SK-N-SH (cell line): ENCODE measurements at regions of chr19 and their contacts with region 1.

Region 1: DNA sequence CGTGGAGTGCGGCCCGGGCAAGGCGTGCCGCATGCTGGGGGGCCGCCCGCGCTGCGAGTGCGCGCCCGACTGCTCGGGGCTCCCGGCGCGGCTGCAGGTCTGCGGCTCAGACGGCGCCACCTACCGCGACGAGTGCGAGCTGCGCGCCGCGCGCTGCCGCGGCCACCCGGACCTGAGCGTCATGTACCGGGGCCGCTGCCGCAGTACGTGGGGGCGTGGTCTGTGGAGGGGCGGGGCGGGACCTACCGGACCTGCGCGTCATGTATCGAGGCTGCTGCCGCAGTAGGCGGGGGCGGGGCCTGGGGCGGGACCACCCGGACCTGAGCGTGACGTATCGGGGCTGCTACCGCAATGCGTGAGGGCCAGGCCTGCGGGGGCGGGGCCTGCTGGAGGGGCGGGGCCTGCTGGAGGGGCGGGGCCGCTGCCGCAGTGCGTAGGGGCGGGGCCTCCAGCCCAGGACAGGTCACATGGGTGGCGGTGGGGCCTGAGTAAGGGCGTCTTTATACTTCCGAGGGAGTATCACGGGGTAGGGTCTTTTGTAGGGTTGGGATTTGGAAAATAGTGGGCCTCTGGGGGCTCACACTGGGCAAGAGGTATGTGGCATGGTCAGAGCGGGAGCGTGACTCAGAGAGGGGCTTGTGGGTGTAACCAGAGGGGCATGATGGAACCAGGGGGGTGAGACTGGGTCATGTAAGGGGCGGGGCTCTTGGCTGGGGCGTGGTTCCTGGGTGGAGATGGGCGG is 4.3 kb downstream of the FSTL3 start:
- DNase-seq: peak; percentile 98
- H3K4me3 ChIP-seq: peak overlapping the region; percentile 82 to 95
- H3K27ac ChIP-seq: peak overlapping the region; percentile 93 to 96
- H3K4me1 ChIP-seq: peaks cover 8 to 29% of the 10 kb centered on the region in 2 experiments; a peak in 3 of 4 replicates
- H3K27me3 ChIP-seq: no peaks in the 10 kb centered on the region
- CTCF ChIP-seq: peak; percentile 41
- EP300 ChIP-seq: no peak
- RAD21 ChIP-seq: peak; percentile 14; the same call in 1 of the 2 replicates

Region 2: DNA sequence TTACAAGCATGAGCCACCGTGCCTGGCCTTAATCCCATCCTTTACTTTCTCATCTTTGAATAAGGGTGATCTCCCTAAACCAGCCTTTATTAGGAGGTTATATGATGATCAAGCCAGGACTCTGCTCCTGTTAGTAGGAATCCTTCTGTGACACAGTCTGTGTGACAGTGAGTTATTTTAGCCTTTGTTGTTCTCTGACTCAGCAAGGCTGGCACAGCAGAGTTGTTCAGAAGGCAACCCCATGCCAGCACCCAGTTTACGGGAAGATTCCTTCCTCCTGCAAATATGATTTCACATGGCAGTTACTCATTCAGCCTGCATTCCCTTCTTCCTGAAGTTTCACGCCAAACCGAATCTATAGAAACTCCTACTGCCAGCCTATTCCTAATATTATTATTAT is 325.3 kb before region 1 on chr19:
- CTCF ChIA-PET with region 1: no interaction called
- POLR2A ChIA-PET with region 1: no interaction called
- DNase-seq: no peak
- H3K4me3 ChIP-seq: no peak overlapping the region
- H3K27ac ChIP-seq: no peak overlapping the region
- H3K4me1 ChIP-seq: no peaks in the 10 kb centered on the region; a peak in 1 of 4 replicates
- H3K27me3 ChIP-seq: no peaks in the 10 kb centered on the region
- CTCF ChIP-seq: no peak
- EP300 ChIP-seq: no peak
- RAD21 ChIP-seq: no peak

Region 3: GRCh38 chr19:623974-624373 is 56.5 kb before region 1 on chr19:
- CTCF ChIA-PET with region 1: no interaction called
- POLR2A ChIA-PET with region 1: no interaction called
- DNase-seq: no peak
- H3K4me3 ChIP-seq: no peak overlapping the region
- H3K27ac ChIP-seq: peak overlapping the region in 1 of 2 experiments; percentile 52; a peak in 1 of 4 replicates
- H3K4me1 ChIP-seq: peaks cover 0 to under 1% of the 10 kb centered on the region in 2 experiments; a peak in 1 of 4 replicates
- H3K27me3 ChIP-seq: no peaks in the 10 kb centered on the region
- CTCF ChIP-seq: no peak
- EP300 ChIP-seq: no peak
- RAD21 ChIP-seq: no peak

Region 4: GRCh38 chr19:703651-704446 is 23.4 kb after region 1 on chr19:
- CTCF ChIA-PET with region 1: interaction called, 27 read pairs
- POLR2A ChIA-PET with region 1: interaction called, 6 read pairs
- DNase-seq: peak; percentile 97
- H3K4me3 ChIP-seq: peak overlapping the region in 1 of 2 experiments; percentile 13; a peak in 2 of 4 replicates
- H3K27ac ChIP-seq: no peak overlapping the region
- H3K4me1 ChIP-seq: peaks cover 0 to 9% of the 10 kb centered on the region in 2 experiments; a peak in 1 of 4 replicates
- H3K27me3 ChIP-seq: no peaks in the 10 kb centered on the region
- CTCF ChIP-seq: no peak
- EP300 ChIP-seq: no peak
- RAD21 ChIP-seq: no peak